ENCODE measurements at regions of chr16 and their contacts with region 1.

Region 1: GRCh38 chr16:48687421-48688038 is 77.5 kb upstream of the N4BP1 start:
- DNase-seq: peak; percentile 65
- CTCF ChIP-seq: peak; percentile 82

Region 2: DNA sequence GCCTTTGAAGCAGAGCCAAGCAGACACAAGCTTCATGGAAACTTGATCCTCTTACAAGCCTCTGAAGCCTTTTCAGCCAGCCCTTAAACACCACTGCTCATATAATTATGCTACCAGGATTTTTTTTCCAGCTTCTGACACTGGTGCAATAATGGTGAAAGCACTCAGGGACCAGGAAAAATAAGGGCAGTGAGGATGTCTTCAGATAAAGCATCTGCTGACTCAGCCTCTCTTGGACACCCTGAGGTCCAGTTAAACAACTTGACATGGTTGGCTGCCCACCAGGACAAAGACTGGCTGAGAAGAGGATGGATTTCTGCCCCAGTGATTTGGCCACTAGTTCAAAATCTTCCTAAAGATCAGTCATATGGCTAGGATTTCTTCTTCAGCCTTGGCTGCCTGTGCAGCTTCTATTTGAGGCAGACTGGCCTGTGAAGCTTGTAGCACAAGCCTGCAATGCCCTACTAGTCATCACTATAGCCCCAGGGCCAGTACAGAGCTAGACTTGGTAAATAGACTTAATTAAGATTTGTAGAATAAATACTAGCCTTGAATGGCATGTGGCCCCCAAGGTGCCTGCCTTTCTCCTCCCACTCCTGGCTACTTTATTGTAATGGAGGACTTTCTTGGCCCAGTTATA is 46.8 kb after region 1 on chr16:
- CTCF ChIA-PET with region 1: no interaction called
- POLR2A ChIA-PET with region 1: no interaction called
- DNase-seq: no peak
- CTCF ChIP-seq: no peak

Region 3: DNA sequence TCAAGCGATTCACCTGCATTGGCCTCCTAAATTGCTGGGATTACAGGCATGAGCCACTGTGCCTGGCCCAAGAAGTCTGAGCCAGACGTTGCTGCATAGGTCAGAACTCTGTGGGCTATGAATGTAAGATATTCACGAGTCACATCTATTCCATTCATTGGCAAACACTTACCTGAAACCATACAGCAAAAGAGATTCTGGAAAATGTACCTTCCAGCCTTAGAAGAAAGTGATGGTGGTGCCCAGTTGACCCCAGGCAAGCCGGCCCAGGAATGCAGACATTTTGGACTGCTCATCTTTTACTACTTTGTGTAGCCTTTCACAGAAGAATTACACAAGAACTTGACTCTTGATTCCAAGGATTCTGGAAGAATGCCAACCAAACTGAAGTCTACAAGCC is 58.0 kb after region 1 on chr16:
- CTCF ChIA-PET with region 1: no interaction called
- POLR2A ChIA-PET with region 1: no interaction called
- DNase-seq: no peak
- CTCF ChIP-seq: no peak

Region 4: GRCh38 chr16:49350265-49351095 is 663.0 kb after region 1 on chr16:
- CTCF ChIA-PET with region 1: interaction called, 26 read pairs
- POLR2A ChIA-PET with region 1: no interaction called
- DNase-seq: peak; percentile 80
- CTCF ChIP-seq: peak; percentile 92

Region 5: GRCh38 chr16:49464877-49465504 is 777.5 kb after region 1 on chr16:
- CTCF ChIA-PET with region 1: no interaction called
- POLR2A ChIA-PET with region 1: no interaction called
- DNase-seq: peak; percentile 59
- CTCF ChIP-seq: peak; percentile 14